HEK293T (cell line): ENCODE measurements at regions of chr10 and their contacts with region 1.

Region 1: DNA sequence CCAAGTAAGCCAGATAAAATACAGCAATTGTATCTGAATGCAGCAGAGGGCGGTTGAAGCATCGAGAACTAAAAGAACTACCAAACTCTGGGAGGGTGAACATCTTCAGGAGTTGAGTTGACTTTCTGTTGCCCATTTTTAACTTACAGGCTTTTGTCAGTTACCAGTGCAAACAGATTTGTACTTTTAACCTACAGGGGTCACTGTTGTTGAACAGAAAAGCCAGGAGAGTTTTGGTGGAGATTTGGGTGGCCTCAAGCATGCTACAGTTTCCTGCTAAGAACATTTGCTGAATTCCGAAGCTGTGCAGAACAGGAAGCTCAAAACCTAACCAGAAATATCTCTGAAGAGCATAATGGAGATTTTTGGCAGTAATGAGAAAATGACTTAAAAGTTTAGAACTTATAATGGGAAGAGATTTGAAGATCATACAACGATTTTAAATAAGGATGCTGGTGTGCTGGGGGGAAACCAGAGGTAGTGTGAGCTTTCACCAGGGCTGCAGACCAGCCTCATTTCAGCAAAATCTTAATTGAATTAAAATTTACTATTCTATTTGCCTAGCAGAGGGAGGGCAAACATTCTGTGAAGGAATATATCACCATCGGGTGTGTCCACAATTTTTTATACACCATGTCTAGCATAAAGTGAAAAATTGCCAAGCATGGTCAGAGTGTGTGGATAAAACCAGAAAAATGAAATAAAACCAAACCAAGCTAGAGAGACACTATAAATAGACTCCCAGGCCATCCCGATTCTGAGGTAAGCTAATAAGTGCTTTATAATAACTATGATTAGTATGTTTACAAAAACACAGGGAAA is 208.6 kb upstream of the CCDC6 start:
- DNase-seq: peak; percentile 50

Region 2: GRCh38 chr10:60167050-60167449 is 52.1 kb after region 1 on chr10:
- CTCF ChIA-PET with region 1: no interaction called
- POLR2A ChIA-PET with region 1: no interaction called
- DNase-seq: no peak

Region 3: GRCh38 chr10:60208676-60209269 is 93.8 kb after region 1 on chr10:
- CTCF ChIA-PET with region 1: interaction called, 27 read pairs
- POLR2A ChIA-PET with region 1: no interaction called
- DNase-seq: peak; percentile 20